ENCODE measurements at regions of chr17 and their contacts with region 1.

Region 1: GRCh38 chr17:59004338-59005111 is 102.2 kb downstream of the TRIM37 start:
- DNase-seq: peak; percentile 35
- ATAC-seq: peak; percentile 35
- H3K4me3 Mint-ChIP-seq: no peak overlapping the region
- H3K27ac Mint-ChIP-seq: peak overlapping the region; percentile 79
- H3K4me1 Mint-ChIP-seq: peaks cover 29% of the 10 kb centered on the region
- H3K27me3 Mint-ChIP-seq: no peaks in the 10 kb centered on the region
- CTCF ChIP-seq: no peak

Region 2: GRCh38 chr17:57255776-57256681 is 1748.5 kb before region 1 on chr17 and contains the start of gene MSI2:
- CTCF ChIA-PET with region 1: no interaction called
- POLR2A ChIA-PET with region 1: no interaction called
- intact Hi-C with region 1: no loop called
- DNase-seq: peak; percentile 86
- ATAC-seq: peak; percentile 79
- H3K4me3 Mint-ChIP-seq: peak within 1 kb of the TSS; percentile 94
- H3K27ac Mint-ChIP-seq: peak within 1 kb of the TSS; percentile 88
- H3K4me1 Mint-ChIP-seq: peaks cover 44% of the 10 kb centered on the region
- H3K27me3 Mint-ChIP-seq: no peaks in the 10 kb centered on the region
- CTCF ChIP-seq: no peak
- total RNA-seq, gene MSI2: 93.2 and 102 TPM in 2 replicates

Region 3: GRCh38 chr17:58337600-58338453 is 666.7 kb before region 1 on chr17:
- CTCF ChIA-PET with region 1: no interaction called
- POLR2A ChIA-PET with region 1: interaction called, 7 read pairs
- intact Hi-C with region 1: loop called (anchors 10 kb)
- DNase-seq: peak; percentile 84
- ATAC-seq: peak; percentile 63
- H3K4me3 Mint-ChIP-seq: peak overlapping the region; percentile 100
- H3K27ac Mint-ChIP-seq: peak overlapping the region; percentile 99
- H3K4me1 Mint-ChIP-seq: peaks cover 97% of the 10 kb centered on the region
- H3K27me3 Mint-ChIP-seq: no peaks in the 10 kb centered on the region
- CTCF ChIP-seq: no peak

Region 4: DNA sequence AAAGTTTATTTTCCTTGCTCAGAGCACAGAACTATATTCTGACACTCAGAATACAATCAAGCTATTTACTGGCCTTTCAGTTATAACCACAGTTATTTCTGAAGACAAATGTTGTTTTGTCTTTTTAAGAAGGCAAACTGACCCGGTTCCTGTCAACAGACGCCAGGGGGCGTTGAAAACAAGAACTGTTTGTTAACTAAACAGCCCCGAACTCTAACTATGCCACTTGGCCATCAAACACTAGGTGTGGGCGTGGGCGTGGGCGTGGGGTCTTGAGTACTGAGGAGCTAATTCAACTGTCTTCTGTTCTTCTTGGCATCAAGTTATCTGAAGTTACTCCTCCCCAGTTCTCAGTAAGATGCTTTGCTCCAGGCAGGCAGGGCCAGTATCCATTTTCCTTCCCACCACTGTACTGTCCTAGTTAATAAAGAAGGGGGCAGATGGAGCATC is 426.9 kb before region 1 on chr17:
- CTCF ChIA-PET with region 1: interaction called, 12 read pairs
- POLR2A ChIA-PET with region 1: no interaction called
- intact Hi-C with region 1: no loop called
- DNase-seq: peak; percentile 17
- ATAC-seq: no peak
- H3K4me3 Mint-ChIP-seq: no peak overlapping the region
- H3K27ac Mint-ChIP-seq: no peak overlapping the region
- H3K4me1 Mint-ChIP-seq: no peaks in the 10 kb centered on the region
- H3K27me3 Mint-ChIP-seq: no peaks in the 10 kb centered on the region
- CTCF ChIP-seq: no peak

Region 5: DNA sequence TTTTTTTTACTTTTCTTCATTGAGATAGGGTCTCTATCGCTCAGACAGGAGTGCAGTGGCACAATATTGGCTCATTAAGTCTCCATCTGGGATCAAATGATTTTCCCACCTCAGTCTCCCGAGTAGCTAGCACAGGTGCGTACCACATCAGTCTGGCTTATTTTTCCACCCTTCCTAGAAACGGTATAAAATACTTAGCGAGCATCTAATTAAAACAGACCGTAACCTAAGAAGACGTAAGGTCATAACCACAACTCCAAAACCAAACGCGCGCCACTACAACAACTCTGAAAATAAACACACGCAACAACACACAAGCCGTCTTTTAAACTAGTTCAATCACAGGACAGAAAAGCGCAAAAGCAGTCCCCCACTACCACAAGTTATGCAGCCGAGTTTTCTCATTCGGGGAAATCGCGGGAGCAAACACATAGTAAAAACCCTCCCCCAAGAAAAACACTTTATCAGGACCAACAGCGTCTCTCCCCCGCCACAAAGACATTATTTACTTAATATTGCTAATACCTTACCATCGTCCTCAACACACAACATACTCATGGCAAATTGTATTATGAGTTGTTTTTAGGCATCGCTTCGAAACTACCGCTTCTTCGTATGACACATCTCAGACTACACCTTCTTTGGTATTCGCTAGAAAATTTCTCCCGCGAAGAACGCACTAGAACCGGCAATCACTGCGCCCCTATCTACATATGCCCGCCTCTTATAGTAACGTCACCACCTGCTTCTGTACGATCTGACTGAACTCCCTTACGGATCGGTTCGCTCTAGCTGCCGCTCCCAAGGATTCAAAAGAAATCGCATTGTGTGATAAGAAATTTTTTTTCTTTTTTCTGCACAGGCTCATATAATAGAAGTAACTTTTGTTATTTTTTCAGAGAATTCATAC is 345.5 kb before region 1 on chr17:
- CTCF ChIA-PET with region 1: no interaction called
- POLR2A ChIA-PET with region 1: interaction called, 7 read pairs
- intact Hi-C with region 1: loop called (anchors 1 kb)
- DNase-seq: peak; percentile 57
- ATAC-seq: peak; percentile 79
- H3K4me3 Mint-ChIP-seq: peak overlapping the region; percentile 84
- H3K27ac Mint-ChIP-seq: peak overlapping the region; percentile 100
- H3K4me1 Mint-ChIP-seq: peaks cover 13% of the 10 kb centered on the region
- H3K27me3 Mint-ChIP-seq: no peaks in the 10 kb centered on the region
- CTCF ChIP-seq: no peak

Region 6: DNA sequence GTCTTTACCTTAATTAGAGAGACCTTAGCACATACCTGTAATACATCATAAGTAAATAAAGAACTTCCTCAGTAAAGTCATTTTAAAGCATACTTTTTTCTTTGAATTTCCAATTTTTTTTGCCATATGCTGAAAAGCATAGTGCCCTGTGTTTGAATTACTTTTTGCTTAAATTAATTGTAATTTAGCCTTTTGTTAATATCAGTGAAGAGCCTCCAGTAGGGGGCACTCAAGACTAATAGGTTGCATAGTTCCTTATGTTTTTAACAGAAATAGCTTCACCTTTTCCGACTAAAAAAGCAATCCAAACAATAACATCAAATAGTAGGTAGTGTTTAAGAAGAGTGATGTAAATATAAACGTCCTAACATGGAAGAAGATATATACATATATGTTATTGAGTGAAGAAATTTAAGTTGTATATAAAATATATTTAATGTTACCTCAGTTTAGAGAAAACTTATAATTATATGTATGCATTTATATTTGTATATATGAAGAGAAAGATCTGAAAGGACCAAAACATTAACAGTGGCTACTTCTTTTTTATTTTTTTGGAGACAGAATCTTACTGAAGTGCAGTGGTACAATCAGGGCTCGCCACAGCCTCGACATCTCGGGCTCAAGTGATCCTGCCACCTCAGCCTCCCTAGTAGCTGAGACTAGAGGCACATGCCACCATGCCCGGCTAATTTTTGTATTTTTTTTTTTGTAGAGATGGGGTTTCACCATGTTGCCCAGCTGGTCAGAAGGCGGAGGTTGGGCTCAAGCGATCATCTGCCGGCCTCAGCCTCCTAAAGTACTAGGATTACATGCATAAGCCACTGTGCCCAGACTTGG is 293.4 kb before region 1 on chr17:
- CTCF ChIA-PET with region 1: interaction called, 94 read pairs
- POLR2A ChIA-PET with region 1: interaction called, 6 read pairs
- intact Hi-C with region 1: loop called (anchors 1 kb)
- DNase-seq: no peak
- ATAC-seq: peak; percentile 40
- H3K4me3 Mint-ChIP-seq: no peak overlapping the region
- H3K27ac Mint-ChIP-seq: no peak overlapping the region
- H3K4me1 Mint-ChIP-seq: peaks cover 12% of the 10 kb centered on the region
- H3K27me3 Mint-ChIP-seq: no peaks in the 10 kb centered on the region
- CTCF ChIP-seq: no peak

Region 7: GRCh38 chr17:59155439-59156182 is 151.1 kb after region 1 on chr17 and contains the start of gene PRR11:
- CTCF ChIA-PET with region 1: no interaction called
- POLR2A ChIA-PET with region 1: no interaction called
- intact Hi-C with region 1: loop called (anchors 2 kb)
- DNase-seq: peak; percentile 65
- ATAC-seq: peak; percentile 88
- H3K4me3 Mint-ChIP-seq: no peak within 1 kb of the TSS
- H3K27ac Mint-ChIP-seq: no peak within 1 kb of the TSS
- H3K4me1 Mint-ChIP-seq: peaks cover 16% of the 10 kb centered on the region
- H3K27me3 Mint-ChIP-seq: no peaks in the 10 kb centered on the region
- CTCF ChIP-seq: no peak
- total RNA-seq, gene PRR11: 2.4 and 4.8 TPM in 2 replicates

Measured in activated B cell treated with CpG ODN at 0.5 μM for 24 hours (primary cell).